Mammary epithelial cell (primary cell): ENCODE measurements at regions of chr6 and their contacts with region 1.

Region 1: GRCh38 chr6:14066782-14067406 is 50.7 kb upstream of the CD83 start:
- DNase-seq: peak; percentile 68
- H3K4me3 ChIP-seq: no peak overlapping the region
- H3K27ac ChIP-seq: no peak overlapping the region
- H3K4me1 ChIP-seq: peaks cover 15% of the 10 kb centered on the region
- H3K27me3 ChIP-seq: no peaks in the 10 kb centered on the region
- CTCF ChIP-seq: peak; percentile 48 to 62

Region 2: GRCh38 chr6:13614926-13615798 is 451.7 kb before region 1 on chr6 and contains the start of gene NOL7:
- CTCF ChIA-PET with region 1: no interaction called
- dilution Hi-C with region 1: no loop called
- in situ Hi-C with region 1: no loop called
- intact Hi-C with region 1: loop called (anchors 10 kb)
- DNase-seq: peak; percentile 95
- H3K4me3 ChIP-seq: peak within 1 kb of the TSS; percentile 66 to 85 (median 81)
- H3K27ac ChIP-seq: peak within 1 kb of the TSS; percentile 77
- H3K4me1 ChIP-seq: peaks cover 10% of the 10 kb centered on the region
- H3K27me3 ChIP-seq: no peaks in the 10 kb centered on the region
- CTCF ChIP-seq: peak; percentile 95
- total RNA-seq, gene NOL7: 20.3 to 70.0 TPM

Region 3: DNA sequence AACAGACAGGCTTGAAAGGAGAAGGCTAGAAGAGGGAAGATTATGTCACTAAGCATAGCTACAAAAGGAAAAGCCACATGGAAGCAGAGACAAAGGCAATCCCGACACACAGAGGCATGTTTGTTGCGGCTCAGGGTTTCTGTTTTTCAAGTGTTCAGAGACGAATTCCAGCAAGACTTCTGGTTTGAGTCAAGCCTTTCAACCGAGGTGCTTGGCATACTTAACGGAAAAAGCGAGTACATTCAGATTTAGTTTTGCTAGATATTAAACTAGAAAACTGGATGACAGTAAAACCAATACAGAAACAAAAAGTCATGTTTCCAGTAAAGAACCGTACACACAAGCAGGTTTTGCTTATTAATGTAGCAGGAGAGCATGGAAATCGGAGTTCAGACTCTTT is 279.8 kb before region 1 on chr6:
- CTCF ChIA-PET with region 1: no interaction called
- dilution Hi-C with region 1: no loop called
- in situ Hi-C with region 1: no loop called
- intact Hi-C with region 1: no loop called
- DNase-seq: no peak
- H3K4me3 ChIP-seq: no peak overlapping the region
- H3K27ac ChIP-seq: no peak overlapping the region
- H3K4me1 ChIP-seq: no peaks in the 10 kb centered on the region
- H3K27me3 ChIP-seq: no peaks in the 10 kb centered on the region
- CTCF ChIP-seq: no peak

Region 4: DNA sequence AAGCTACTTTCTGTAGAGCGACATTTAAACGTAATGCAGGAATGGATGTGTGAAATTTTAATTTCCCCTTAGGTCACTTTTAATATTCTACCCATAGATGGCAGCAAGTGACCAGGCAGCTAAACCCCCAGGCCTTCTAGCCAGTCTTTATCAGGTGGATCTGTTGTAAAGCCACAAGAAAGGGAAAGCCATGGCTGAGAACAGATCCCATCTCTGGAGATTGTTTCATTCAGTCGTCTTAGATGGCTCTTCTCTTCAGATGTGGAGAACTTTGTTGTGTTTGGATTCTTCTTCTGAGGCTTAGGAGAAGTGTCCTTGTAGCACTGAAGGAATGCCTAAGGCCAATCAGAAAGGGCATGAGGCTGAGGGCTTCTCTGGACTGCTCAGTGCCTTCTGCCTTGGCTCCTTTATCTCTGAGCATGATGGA is 157.9 kb before region 1 on chr6:
- CTCF ChIA-PET with region 1: interaction called, 4 read pairs
- dilution Hi-C with region 1: loop called (anchors 10 kb)
- in situ Hi-C with region 1: loop called (anchors 5 kb)
- intact Hi-C with region 1: loop called (anchors 1 kb)
- DNase-seq: peak; percentile 55
- H3K4me3 ChIP-seq: no peak overlapping the region
- H3K27ac ChIP-seq: no peak overlapping the region
- H3K4me1 ChIP-seq: peaks cover 14% of the 10 kb centered on the region
- H3K27me3 ChIP-seq: peaks cover 4% of the 10 kb centered on the region
- CTCF ChIP-seq: peak; percentile 78 to 79

Region 5: GRCh38 chr6:14046476-14047068 is 20.3 kb before region 1 on chr6:
- CTCF ChIA-PET with region 1: interaction called, 9 read pairs
- dilution Hi-C with region 1: no loop called
- in situ Hi-C with region 1: no loop called
- intact Hi-C with region 1: loop called (anchors 2 kb)
- DNase-seq: peak; percentile 39
- H3K4me3 ChIP-seq: no peak overlapping the region
- H3K27ac ChIP-seq: no peak overlapping the region
- H3K4me1 ChIP-seq: no peaks in the 10 kb centered on the region
- H3K27me3 ChIP-seq: no peaks in the 10 kb centered on the region
- CTCF ChIP-seq: peak; percentile 88 to 91

Region 6: GRCh38 chr6:15621203-15622044 is 1554.5 kb after region 1 on chr6:
- CTCF ChIA-PET with region 1: no interaction called
- dilution Hi-C with region 1: no loop called
- in situ Hi-C with region 1: no loop called
- intact Hi-C with region 1: loop called (anchors 5 kb)
- DNase-seq: peak; percentile 73
- H3K4me3 ChIP-seq: no peak overlapping the region
- H3K27ac ChIP-seq: peak overlapping the region; percentile 43
- H3K4me1 ChIP-seq: peaks cover 15% of the 10 kb centered on the region
- H3K27me3 ChIP-seq: no peaks in the 10 kb centered on the region
- CTCF ChIP-seq: no peak